ENCODE measurements at regions of chr6 and their contacts with region 1.

Region 1: DNA sequence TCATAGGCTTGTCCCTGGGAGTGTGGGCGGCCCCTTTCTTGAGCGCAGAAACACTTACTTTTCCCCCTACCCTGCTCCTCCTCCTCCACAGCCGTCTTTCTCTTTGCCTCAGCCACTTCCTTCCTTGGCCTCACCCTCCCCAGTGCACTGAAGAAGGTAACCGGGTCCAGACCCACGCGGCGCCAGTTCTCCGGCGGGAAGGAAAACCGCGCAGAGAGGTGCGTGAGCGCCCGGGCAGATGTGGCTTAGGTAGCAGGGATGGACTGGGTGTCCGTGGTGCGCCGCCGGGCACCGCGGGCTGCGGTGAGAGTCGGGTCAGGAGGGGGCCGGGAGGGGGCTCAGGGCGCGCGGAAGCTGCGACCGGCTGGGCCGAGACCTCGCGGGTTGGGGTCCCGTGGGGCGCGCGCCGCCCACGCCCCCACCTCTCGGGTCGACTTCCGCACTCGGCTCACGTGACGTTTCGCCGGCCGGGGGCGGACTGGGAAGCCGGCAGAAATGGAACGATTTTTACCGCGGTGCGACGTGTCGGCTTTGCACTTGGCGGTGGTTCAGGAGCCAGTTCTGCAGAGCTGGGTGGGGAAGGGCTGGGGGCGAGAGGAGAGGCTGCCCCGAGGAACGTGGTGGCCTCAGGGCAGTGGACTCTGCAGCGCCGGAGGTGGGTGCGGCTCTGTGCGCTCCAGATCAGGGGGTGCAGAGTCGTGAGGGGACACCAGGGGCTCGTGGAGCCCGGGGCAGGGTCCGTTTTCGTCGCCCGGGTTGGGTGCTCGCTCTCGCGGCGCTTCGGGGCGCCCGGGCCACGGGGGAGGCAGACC is at the start of gene ABRACL:
- DNase-seq: peak; percentile 73
- H3K4me3 Mint-ChIP-seq: peak within 1 kb of the TSS; percentile 93
- H3K27ac Mint-ChIP-seq: peak within 1 kb of the TSS; percentile 82
- H3K4me1 Mint-ChIP-seq: peaks cover 29% of the 10 kb centered on the region
- H3K27me3 Mint-ChIP-seq: no peaks in the 10 kb centered on the region
- total RNA-seq, gene ABRACL: 129 and 135 TPM in 2 replicates

Region 2: GRCh38 chr6:138773177-138774091 is 255.4 kb before region 1 on chr6 and contains the start of gene CCDC28A:
- intact Hi-C with region 1: loop called (anchors 1 kb)
- DNase-seq: peak; percentile 89
- H3K4me3 Mint-ChIP-seq: peak within 1 kb of the TSS; percentile 99
- H3K27ac Mint-ChIP-seq: peak within 1 kb of the TSS; percentile 100
- H3K4me1 Mint-ChIP-seq: peaks cover 23% of the 10 kb centered on the region
- H3K27me3 Mint-ChIP-seq: no peaks in the 10 kb centered on the region
- total RNA-seq, gene CCDC28A: 16.1 and 17.9 TPM in 2 replicates

Region 3: DNA sequence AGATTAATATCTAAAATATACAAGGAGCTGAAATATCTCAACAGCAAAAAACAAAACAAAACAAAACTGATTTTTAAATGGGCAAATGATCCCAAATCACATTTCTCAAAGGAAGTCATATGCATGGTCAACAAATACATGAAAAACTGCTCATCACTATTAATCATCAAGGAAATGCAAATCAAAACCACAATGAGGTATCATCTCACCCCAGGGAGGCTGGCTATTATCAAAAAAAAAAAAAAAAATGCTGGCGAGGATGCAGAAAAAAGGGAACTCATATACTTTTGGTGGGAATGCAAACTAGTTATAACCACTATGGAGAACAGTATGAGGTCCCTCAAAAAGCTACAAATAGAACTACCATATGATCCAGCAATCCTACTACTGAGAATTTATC is 75.4 kb before region 1 on chr6:
- intact Hi-C with region 1: no loop called
- DNase-seq: no peak
- H3K4me3 Mint-ChIP-seq: no peak overlapping the region
- H3K27ac Mint-ChIP-seq: no peak overlapping the region
- H3K4me1 Mint-ChIP-seq: peaks cover 69% of the 10 kb centered on the region
- H3K27me3 Mint-ChIP-seq: no peaks in the 10 kb centered on the region

Region 4: DNA sequence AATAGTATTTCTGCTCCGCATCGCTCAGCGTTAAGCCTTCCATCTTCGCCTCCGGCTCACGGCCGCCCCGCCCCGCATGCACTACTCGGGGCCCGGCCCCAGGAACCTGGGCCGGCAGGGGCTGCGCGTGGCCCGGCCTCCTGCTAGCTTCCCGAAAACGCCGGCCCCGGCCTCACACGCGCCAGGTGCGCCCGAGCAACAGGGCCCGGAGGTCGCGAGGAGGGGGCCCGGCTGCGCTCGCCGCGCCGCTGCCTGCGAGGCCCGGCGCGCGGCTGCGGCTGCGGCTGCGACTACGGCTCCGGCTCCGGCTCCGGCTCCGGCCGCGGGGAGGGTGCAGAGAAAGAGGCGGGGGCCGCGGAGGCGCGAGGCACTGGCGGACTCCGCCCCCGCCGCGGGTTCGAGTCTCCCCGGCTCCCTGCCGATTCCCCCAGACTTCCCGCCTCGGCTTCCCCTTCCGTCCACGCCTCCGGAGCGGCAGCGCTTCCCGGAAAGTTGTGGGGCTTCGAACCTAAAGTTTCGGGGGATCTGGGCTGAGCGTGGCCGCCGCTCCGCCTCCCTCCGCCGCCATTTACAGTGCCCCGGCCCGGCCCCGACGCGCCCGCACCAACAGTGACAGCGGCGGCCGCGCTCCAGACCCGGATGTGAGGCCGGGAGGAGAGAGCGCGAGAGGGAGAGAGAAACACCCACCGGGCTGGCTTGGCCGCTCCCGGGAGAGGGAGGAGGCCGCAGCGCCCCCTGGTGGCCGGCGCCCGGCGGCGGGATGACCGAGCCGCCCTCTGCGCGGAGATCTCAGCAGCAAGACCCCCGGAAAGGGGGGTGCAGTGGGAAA is 41.0 kb before region 1 on chr6 and contains the start of gene REPS1:
- intact Hi-C with region 1: loop called (anchors 1 kb)
- DNase-seq: peak; percentile 88
- H3K4me3 Mint-ChIP-seq: peak within 1 kb of the TSS; percentile 89
- H3K27ac Mint-ChIP-seq: peak within 1 kb of the TSS; percentile 92
- H3K4me1 Mint-ChIP-seq: peaks cover 7% of the 10 kb centered on the region
- H3K27me3 Mint-ChIP-seq: no peaks in the 10 kb centered on the region
- total RNA-seq, gene REPS1: 69.6 and 74.6 TPM in 2 replicates

Region 5: GRCh38 chr6:139109558-139109957 is 80.7 kb after region 1 on chr6:
- intact Hi-C with region 1: loop called (anchors 1 kb)
- DNase-seq: no peak
- H3K4me3 Mint-ChIP-seq: no peak overlapping the region
- H3K27ac Mint-ChIP-seq: no peak overlapping the region
- H3K4me1 Mint-ChIP-seq: peaks cover 22% of the 10 kb centered on the region
- H3K27me3 Mint-ChIP-seq: no peaks in the 10 kb centered on the region

Region 6: DNA sequence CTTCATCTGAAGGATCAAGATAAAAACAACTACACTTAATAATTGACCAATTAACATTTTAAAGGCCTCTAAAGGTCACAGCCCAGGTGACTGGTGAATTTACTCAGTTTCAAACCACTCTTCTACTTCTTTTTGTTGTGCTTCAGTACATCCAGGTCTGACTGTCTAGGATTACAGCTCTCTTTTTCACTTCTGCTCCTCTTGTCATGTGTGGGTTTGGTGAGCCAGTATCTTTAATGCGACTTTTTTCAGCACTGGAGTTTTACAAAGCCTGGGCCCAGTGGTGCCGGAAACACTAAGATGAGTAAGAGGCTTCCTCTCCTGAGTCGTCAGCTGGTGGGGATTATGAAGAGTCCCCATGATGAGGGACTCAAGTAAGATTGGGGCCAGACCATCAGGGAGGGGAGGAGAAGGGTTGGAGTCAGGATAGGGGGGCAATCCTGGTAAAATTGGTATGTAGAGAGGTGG is 133.0 kb after region 1 on chr6:
- intact Hi-C with region 1: loop called (anchors 2 kb)
- DNase-seq: peak; percentile 72
- H3K4me3 Mint-ChIP-seq: peak overlapping the region; percentile 68
- H3K27ac Mint-ChIP-seq: peak overlapping the region; percentile 97
- H3K4me1 Mint-ChIP-seq: peaks cover 71% of the 10 kb centered on the region
- H3K27me3 Mint-ChIP-seq: no peaks in the 10 kb centered on the region

Region 7: DNA sequence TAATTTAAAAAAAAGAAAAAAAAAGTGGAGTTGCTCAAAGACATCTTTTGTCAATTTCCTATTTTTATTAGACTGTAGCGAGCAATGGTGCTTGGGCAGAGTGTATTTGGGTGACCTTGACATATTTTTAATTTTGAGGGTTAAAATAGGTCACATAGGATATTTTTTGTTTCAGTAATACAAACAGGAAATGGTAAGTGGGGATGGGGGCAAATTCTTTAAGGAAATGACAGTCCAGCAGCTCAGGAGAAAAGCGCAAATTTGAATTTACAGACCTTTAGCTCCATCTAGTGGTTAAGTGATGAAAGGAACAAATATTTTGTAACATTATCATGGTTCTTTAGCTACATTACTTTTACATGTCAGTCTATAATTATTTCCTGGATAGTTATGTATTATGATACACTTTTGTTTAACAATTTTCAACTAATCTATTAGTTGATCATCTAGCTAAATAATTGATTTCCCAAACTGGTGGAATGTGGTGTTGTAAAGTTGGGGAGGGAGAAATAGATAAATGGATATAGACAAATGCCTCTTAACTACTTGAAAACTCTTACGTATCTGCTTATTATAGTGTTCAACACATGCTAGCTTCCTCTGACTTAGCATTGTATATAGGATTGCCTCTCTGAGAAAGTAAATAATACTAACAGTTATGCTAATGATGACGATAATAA is 335.6 kb after region 1 on chr6:
- intact Hi-C with region 1: loop called (anchors 2 kb)
- DNase-seq: no peak
- H3K4me3 Mint-ChIP-seq: no peak overlapping the region
- H3K27ac Mint-ChIP-seq: no peak overlapping the region
- H3K4me1 Mint-ChIP-seq: peaks cover 47% of the 10 kb centered on the region
- H3K27me3 Mint-ChIP-seq: peaks cover 4% of the 10 kb centered on the region